Activated CD8-positive, alpha-beta T cell treated with anti-CD3 and anti-CD28 coated beads, Interleukin-2, amount 10 ng/mL, durations not matched to agents 7 days and 5 days (primary cell): ENCODE measurements at regions of chr12 and their contacts with region 1.

Region 1: GRCh38 chr12:54368709-54369583 is 4.7 kb upstream of the GPR84 start:
- DNase-seq: peak; percentile 93
- ATAC-seq: peak; percentile 89
- H3K4me3 Mint-ChIP-seq: no peak overlapping the region
- H3K27ac Mint-ChIP-seq: peak overlapping the region; percentile 32
- H3K4me1 Mint-ChIP-seq: peaks cover 52% of the 10 kb centered on the region
- H3K27me3 Mint-ChIP-seq: peaks cover 4% of the 10 kb centered on the region

Region 2: DNA sequence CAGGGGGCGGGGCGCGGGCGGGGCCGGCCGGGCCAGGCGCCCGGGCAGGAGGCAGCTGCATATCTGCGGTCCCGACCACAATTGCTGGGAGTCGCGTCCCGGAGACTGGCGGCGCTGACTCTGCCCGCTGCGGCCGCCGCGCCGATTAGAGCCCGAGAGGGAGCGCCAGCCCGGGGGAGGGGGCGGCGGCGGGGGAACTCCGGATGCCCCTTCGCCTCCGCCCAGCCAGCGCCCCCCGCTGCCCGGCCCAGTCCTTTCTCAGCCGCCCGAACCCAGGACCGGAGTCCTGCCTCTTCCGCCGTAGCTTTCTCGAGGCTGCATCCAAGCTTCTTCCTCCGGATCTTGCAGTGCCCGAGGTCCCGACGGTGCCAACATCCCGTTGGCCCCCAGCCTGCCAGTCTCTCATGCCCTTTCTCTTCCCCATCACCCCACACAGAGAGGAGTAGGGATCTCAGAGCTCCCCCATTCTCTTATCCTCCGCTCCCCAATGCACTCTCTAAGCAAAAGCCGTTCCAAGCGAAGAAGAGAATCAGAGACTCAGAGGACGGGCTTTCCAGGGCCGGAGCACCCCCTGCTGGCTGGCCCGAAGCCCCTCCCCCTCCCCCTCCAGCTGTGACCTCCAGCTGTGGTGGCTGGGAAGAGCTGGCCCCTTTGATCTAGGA is 1024.0 kb before region 1 on chr12:
- CTCF ChIA-PET with region 1: no interaction called
- POLR2A ChIA-PET with region 1: no interaction called
- DNase-seq: peak; percentile 78
- ATAC-seq: peak; percentile 85
- H3K4me3 Mint-ChIP-seq: peak overlapping the region; percentile 92
- H3K27ac Mint-ChIP-seq: peak overlapping the region; percentile 91
- H3K4me1 Mint-ChIP-seq: peaks cover 17% of the 10 kb centered on the region
- H3K27me3 Mint-ChIP-seq: peaks cover 9% of the 10 kb centered on the region

Region 3: GRCh38 chr12:54220092-54220557 is 148.8 kb before region 1 on chr12:
- CTCF ChIA-PET with region 1: interaction called, 12 read pairs
- POLR2A ChIA-PET with region 1: no interaction called
- DNase-seq: peak; percentile 78
- ATAC-seq: peak; percentile 45
- H3K4me3 Mint-ChIP-seq: no peak overlapping the region
- H3K27ac Mint-ChIP-seq: no peak overlapping the region
- H3K4me1 Mint-ChIP-seq: peaks cover 31% of the 10 kb centered on the region
- H3K27me3 Mint-ChIP-seq: peaks cover 18% of the 10 kb centered on the region

Region 4: DNA sequence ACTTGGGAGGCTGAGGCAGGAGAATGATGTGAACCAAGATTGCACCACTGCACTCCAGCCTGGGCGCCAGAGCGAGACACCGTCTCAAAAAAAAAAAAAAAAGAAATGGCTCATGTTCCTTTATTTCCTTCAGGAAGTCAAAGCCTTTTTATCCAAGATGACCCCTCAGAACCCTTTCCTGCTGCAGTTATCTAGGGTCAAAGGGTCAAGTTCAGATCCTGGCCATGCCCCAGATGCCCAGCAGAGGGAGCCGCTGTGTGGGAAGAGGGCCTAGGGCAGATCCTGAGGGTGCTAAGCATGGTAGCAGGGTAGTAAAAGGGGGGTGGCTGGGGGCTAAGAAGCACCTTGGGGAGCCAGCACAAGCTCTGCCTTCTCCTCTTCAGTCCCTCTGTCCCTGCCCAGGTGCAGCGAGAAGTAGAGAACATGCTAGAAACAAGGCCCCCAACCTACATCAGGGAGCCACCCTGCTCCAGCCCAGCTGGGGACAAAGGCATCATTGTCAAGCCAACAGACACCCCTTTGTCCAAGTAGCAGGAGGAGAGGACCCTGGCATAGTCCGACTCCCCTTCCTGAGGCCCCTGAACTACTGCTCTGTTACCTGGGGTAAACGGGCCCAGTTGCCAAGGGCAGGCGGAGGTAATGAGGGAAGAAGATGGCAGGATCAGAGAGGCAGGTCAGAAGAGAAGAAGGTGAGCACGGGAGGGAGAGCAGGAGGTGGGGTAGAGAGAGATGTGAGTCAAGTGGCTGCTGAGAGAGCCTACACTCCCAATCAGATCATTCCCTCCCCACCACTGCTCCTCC is 74.6 kb before region 1 on chr12:
- CTCF ChIA-PET with region 1: interaction called, 77 read pairs
- POLR2A ChIA-PET with region 1: interaction called, 3 read pairs
- DNase-seq: peak; percentile 76
- ATAC-seq: peak; percentile 58
- H3K4me3 Mint-ChIP-seq: no peak overlapping the region
- H3K27ac Mint-ChIP-seq: no peak overlapping the region
- H3K4me1 Mint-ChIP-seq: peaks cover 5% of the 10 kb centered on the region
- H3K27me3 Mint-ChIP-seq: peaks cover 18% of the 10 kb centered on the region